ENCODE measurements at regions of chr1 and their contacts with region 1.

Region 1: GRCh38 chr1:26787706-26788514 is at the start of gene PIGV:
- DNase-seq: peak; percentile 80 to 88 (median 87)
- H3K4me3 ChIP-seq: peak within 1 kb of the TSS; percentile 72 to 95 (median 91)
- H3K27ac ChIP-seq: peak within 1 kb of the TSS; percentile 87 to 96
- H3K4me1 ChIP-seq: peaks cover 63 to 84% (median 73%) of the 10 kb centered on the region in 4 experiments
- H3K27me3 ChIP-seq: no peaks in the 10 kb centered on the region

Region 2: DNA sequence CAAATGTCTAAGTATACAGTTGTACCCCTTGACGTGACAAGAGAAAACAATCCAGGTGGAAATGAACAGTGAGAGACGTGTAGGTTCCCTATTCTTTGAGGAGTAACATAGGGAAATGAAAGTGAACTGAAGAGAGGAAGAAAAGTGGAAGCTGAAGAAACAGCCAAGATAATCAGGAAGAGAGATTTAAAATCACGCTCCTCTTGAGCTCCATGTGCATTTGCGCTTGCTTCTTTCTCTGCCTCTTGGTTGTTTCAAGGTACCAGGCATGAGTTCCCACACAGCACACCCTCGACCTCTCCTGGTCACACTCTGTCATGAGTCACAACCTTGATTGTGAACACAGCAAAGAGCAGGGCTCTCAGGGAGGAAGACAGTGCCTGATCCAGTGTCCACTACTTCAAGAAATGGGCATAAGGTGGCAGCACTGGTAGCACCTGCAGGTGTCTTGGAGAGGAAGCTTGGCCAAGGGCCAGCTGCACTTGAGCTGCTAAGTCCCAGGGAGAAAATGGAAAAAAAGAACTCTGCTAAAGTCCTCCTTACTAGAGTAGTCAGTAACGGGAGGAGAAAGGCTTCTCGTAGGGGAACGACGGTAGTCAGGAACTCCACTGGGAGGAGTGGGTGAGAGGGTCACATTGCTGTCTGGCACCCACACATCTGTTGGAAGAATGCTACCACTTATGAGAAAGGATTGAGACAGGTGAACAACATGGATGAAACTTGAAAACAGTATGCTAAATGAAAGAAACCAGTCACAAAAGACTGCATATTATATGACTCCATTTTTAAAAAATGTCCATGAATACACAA is 110.4 kb before region 1 on chr1:
- CTCF ChIA-PET with region 1: interaction called, 15 read pairs
- POLR2A ChIA-PET with region 1: no interaction called
- DNase-seq: peak; percentile 84 to 89 (median 89)
- H3K4me3 ChIP-seq: peak overlapping the region in 6 of 7 experiments; percentile 2 to 74 (median 42)
- H3K27ac ChIP-seq: no peak overlapping the region
- H3K4me1 ChIP-seq: peaks cover 7 to 19% (median 14%) of the 10 kb centered on the region in 4 experiments
- H3K27me3 ChIP-seq: no peaks in the 10 kb centered on the region

Region 3: DNA sequence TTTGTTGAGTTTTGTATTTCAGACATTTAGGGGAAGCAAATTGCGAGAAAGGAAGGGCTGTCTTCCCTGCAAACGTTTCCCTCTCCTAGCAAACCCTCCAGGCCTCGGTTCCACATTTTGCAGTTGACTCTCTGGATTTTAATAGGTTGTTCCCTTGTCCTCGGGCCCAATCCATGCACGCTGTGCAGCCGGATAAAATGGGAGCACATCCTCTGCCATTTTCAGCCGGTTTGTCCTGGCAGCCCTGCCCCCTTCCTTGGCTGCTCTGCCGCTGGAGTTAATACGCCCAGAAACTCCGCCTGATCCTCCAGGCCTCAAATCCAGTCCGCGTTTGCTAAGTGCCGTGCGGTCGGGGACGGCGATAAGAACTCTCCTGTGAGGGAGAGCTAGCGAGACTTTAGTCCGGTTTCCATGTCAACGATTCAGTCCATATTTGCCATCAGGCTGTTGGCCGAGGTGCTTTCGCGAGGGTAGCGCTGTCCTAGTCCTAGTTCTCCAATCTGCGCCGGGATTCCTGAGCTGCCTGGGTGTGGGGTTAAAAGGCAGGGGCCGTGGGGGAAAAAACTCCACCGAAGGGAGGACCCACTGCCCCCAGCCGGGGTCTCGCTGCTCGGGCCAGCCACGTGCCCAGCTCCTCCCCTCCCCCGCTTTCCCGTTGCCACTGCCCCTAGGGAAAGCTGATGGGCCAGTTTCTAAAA is 95.0 kb before region 1 on chr1:
- CTCF ChIA-PET with region 1: interaction called, 37 read pairs
- POLR2A ChIA-PET with region 1: interaction called, 9 read pairs
- DNase-seq: peak; percentile 97 to 99 (median 98)
- H3K4me3 ChIP-seq: peak overlapping the region; percentile 64 to 93 (median 75)
- H3K27ac ChIP-seq: peak overlapping the region; percentile 67 to 91
- H3K4me1 ChIP-seq: peaks cover 25 to 57% (median 52%) of the 10 kb centered on the region in 4 experiments
- H3K27me3 ChIP-seq: no peaks in the 10 kb centered on the region

Region 4: DNA sequence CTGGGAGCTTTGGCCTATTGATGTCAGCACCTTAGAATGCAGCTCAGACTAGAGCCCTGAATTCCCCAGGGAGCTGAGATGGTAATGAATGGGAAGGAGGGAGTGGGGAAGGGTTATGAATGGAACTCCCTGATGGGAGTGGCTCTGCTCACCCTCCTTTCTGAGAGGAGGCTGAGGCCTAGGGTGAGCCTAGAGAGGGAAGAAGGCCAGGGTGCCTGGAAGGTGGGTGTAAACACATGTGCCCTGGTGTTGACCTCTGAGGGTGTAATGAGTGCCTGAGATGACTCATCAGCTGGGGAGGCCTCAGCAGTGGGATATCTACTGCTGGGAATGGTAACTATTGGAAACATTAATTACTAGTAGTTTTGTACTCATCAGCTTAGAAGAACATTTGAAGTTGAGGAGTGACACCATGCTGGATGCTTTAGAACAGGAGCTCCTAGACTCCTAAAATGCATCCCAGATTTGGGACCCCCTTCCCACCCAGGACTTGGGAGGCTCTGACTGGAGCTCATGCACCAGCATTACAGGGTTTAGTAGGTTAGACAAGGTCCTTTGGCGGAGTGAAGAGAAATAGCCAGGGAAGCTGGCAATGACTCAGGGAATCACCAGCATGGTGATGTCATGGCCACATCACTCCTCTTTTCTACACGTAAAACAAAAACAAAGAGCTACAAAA is 16.1 kb before region 1 on chr1:
- CTCF ChIA-PET with region 1: interaction called, 14 read pairs
- POLR2A ChIA-PET with region 1: no interaction called
- DNase-seq: no peak
- H3K4me3 ChIP-seq: no peak overlapping the region
- H3K27ac ChIP-seq: peak overlapping the region in 1 of 2 experiments; percentile 38
- H3K4me1 ChIP-seq: peaks cover 0 to 23% (median 13%) of the 10 kb centered on the region in 4 experiments
- H3K27me3 ChIP-seq: no peaks in the 10 kb centered on the region

Region 5: GRCh38 chr1:26799479-26800142 is 11.7 kb after region 1 on chr1:
- CTCF ChIA-PET with region 1: interaction called, 49 read pairs
- POLR2A ChIA-PET with region 1: interaction called, 3 read pairs
- DNase-seq: peak in 1 of 3 donors; percentile 23
- H3K4me3 ChIP-seq: no peak overlapping the region
- H3K27ac ChIP-seq: peak overlapping the region in 1 of 2 experiments; percentile 51
- H3K4me1 ChIP-seq: peaks cover 4 to 19% (median 13%) of the 10 kb centered on the region in 4 experiments
- H3K27me3 ChIP-seq: no peaks in the 10 kb centered on the region

Region 6: GRCh38 chr1:27662707-27663393 is 874.9 kb after region 1 on chr1:
- CTCF ChIA-PET with region 1: no interaction called
- POLR2A ChIA-PET with region 1: no interaction called
- DNase-seq: peak; percentile 88 to 93 (median 90)
- H3K4me3 ChIP-seq: peak overlapping the region in 4 of 7 experiments; percentile 33 to 52 (median 41)
- H3K27ac ChIP-seq: peak overlapping the region in 1 of 2 experiments; percentile 66
- H3K4me1 ChIP-seq: peaks cover 14 to 54% (median 30%) of the 10 kb centered on the region in 4 experiments
- H3K27me3 ChIP-seq: no peaks in the 10 kb centered on the region